Testis (tissue), 5 donors: ENCODE measurements at regions of chr14 and their contacts with region 1.

Region 1: DNA sequence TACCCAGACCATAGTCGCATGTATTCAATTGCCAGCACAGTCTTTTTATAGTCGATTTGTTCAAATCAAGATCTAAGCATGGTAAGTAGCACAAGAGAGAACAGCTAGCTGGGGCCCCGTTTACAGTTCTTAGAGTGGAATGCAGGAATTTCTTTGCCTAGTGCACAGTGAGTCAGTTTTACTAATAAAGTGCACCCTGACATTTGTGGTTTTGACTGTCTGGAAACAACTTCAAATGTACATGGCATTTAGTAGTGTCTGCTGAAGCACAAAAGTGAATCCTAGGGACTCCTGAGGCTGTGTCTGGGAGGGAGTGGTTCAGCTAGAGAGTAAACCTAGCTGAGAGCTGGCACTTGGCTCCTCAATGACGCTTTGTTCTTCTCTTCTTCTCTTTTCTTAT is 64.9 kb downstream of the TMX1 start:
- DNase-seq: no peak
- H3K4me3 ChIP-seq: no peak overlapping the region
- H3K27ac ChIP-seq: no peak overlapping the region
- H3K4me1 ChIP-seq: no peaks in the 10 kb centered on the region
- H3K27me3 ChIP-seq: no peaks in the 10 kb centered on the region
- CTCF ChIP-seq: no peak
- POLR2A ChIP-seq: no peak

Region 2: GRCh38 chr14:51507906-51508511 is 203.1 kb after region 1 on chr14:
- intact Hi-C with region 1: loop called (anchors 5 kb)
- DNase-seq: peak; percentile 69
- H3K4me3 ChIP-seq: no peak overlapping the region
- H3K27ac ChIP-seq: peak overlapping the region; percentile 50 to 71
- H3K4me1 ChIP-seq: peaks cover 13% of the 10 kb centered on the region
- H3K27me3 ChIP-seq: no peaks in the 10 kb centered on the region
- CTCF ChIP-seq: no peak
- POLR2A ChIP-seq: no peak